Activated CD4-positive, alpha-beta T cell treated with anti-CD3 and anti-CD28 coated beads for 36 hours (primary cell): ENCODE measurements at regions of chr6 and their contacts with region 1.

Region 1: DNA sequence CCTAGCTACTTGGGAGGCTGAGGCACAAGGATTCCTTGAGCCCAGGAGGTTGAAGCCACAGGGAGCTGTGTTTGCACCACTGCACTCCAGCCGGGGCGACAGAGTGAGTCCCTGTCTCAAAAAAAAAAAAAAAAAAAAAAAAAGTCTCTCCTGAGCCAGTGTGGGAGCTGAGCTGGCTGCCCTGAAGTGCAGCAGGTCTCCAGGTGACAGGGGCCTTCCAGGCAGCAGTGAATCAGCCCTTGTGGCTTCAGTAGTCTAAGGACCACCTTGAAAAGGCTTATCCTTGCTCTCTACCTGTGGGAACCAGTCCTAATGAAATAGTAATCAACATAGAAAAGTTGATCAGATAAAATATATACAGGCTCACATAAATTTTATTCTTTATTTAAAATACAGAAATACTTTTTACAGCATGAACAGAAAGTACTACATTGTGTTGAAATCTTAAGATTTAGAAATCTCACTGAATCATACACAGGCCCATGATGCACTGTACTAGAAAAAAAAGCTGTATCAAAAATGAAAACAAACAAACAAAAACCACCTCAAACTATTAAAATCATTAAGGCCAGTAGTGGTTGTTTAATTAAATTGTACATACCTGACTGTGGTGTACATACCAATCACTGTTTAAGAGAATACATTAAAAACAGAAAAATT is 128.9 kb downstream of the SCML4 start:
- DNase-seq: no peak
- ATAC-seq: no peak
- H3K4me3 Mint-ChIP-seq: no peak overlapping the region
- H3K27ac Mint-ChIP-seq: no peak overlapping the region
- H3K4me1 Mint-ChIP-seq: peaks cover 16% of the 10 kb centered on the region
- H3K27me3 Mint-ChIP-seq: no peaks in the 10 kb centered on the region

Region 2: GRCh38 chr6:107720717-107721116 is 25.5 kb after region 1 on chr6:
- CTCF ChIA-PET with region 1: no interaction called
- POLR2A ChIA-PET with region 1: no interaction called
- intact Hi-C with region 1: no loop called
- DNase-seq: no peak
- ATAC-seq: no peak
- H3K4me3 Mint-ChIP-seq: no peak overlapping the region
- H3K27ac Mint-ChIP-seq: peak overlapping the region; percentile 14
- H3K4me1 Mint-ChIP-seq: peaks cover 67% of the 10 kb centered on the region
- H3K27me3 Mint-ChIP-seq: no peaks in the 10 kb centered on the region

Region 3: GRCh38 chr6:108074359-108075144 is 379.4 kb after region 1 on chr6 and contains the start of gene OSTM1:
- CTCF ChIA-PET with region 1: no interaction called
- POLR2A ChIA-PET with region 1: interaction called, 14 read pairs
- intact Hi-C with region 1: no loop called
- DNase-seq: peak; percentile 96
- ATAC-seq: peak; percentile 98
- H3K4me3 Mint-ChIP-seq: peak within 1 kb of the TSS; percentile 76
- H3K27ac Mint-ChIP-seq: peak within 1 kb of the TSS; percentile 80
- H3K4me1 Mint-ChIP-seq: peaks cover 19% of the 10 kb centered on the region
- H3K27me3 Mint-ChIP-seq: peaks cover 3% of the 10 kb centered on the region
- total RNA-seq, gene OSTM1: 5.5 to 7.3 TPM

Region 4: GRCh38 chr6:108798670-108799353 is 1103.6 kb after region 1 on chr6:
- CTCF ChIA-PET with region 1: no interaction called
- POLR2A ChIA-PET with region 1: no interaction called
- intact Hi-C with region 1: no loop called
- DNase-seq: peak; percentile 80
- ATAC-seq: peak; percentile 98
- H3K4me3 Mint-ChIP-seq: peak overlapping the region; percentile 45
- H3K27ac Mint-ChIP-seq: peak overlapping the region; percentile 86
- H3K4me1 Mint-ChIP-seq: peaks cover 18% of the 10 kb centered on the region
- H3K27me3 Mint-ChIP-seq: peaks cover 3% of the 10 kb centered on the region